GM13976 (cell line): ENCODE measurements at regions of chr4 and their contacts with region 1.

Region 1: GRCh38 chr4:119300101-119300978 is 21.6 kb downstream of the FABP2 start:
- DNase-seq: peak; percentile 90
- CTCF ChIP-seq: no peak

Region 2: GRCh38 chr4:118703118-118703517 is 597.2 kb before region 1 on chr4:
- in situ Hi-C with region 1: no loop called
- DNase-seq: no peak
- CTCF ChIP-seq: no peak

Region 3: GRCh38 chr4:118772081-118772766 is 528.1 kb before region 1 on chr4:
- in situ Hi-C with region 1: no loop called
- DNase-seq: peak; percentile 33
- CTCF ChIP-seq: peak; percentile 28

Region 4: GRCh38 chr4:118783887-118784286 is 516.5 kb before region 1 on chr4:
- in situ Hi-C with region 1: no loop called
- DNase-seq: no peak
- CTCF ChIP-seq: no peak

Region 5: DNA sequence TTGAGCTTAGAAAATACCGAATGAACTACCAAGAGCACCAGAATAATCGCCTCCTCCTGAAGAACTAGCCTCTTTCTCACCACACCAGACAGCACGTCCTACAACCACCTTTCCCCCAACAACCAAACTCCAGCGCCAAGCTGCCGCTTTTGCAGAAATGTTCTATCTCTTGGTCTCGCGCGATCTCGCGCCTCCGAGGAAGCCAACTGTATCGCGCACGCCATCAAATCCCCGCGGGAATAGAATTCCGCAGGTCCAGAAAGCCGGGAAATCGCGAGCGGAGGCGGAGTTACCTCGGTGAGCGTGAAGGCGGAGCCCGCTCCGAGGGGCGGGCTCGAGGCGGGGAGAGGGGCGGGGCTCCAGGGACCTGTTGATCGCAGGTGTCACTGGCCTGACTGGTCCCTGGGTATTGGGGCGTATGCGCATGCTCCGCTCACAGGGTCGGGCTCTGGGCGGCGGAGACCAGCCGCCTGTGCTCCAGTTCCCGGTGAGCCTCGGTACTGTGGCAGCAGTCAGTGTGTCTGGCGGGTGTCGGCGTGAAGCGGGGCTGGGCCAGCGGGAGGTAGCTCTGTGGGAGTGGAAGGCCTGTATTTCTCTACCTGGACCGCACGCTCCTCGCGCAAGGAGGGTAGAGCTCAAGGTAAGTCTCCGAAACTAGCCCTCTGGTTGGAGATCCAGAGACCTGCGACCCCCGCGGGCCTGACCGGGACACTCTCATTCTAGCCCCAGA is 87.9 kb before region 1 on chr4 and contains the start of gene USP53:
- in situ Hi-C with region 1: loop called (anchors 10 kb)
- DNase-seq: peak; percentile 96
- CTCF ChIP-seq: no peak

Region 6: GRCh38 chr4:119489305-119489704 is 189.0 kb after region 1 on chr4:
- in situ Hi-C with region 1: loop called (anchors 10 kb)
- DNase-seq: no peak
- CTCF ChIP-seq: no peak

Region 7: DNA sequence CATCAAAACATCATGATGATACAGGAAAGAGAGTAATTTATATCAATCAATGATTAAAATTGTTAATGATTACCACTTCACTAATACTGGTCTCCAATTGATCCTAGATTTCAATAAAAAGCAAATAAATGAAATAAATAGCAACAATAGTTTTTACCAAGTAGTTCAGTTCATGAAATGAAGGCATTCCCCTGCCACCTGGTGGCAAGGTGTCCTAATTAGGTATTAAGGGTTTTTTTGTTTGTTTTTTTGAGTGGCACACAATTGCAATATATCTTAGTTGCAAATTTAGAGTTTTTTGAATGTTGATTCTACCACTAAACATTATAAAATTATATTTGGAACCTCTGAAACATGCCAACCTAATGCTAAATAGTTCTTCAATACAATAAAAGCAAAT is 485.6 kb after region 1 on chr4:
- in situ Hi-C with region 1: loop called (anchors 25 kb)
- DNase-seq: no peak
- CTCF ChIP-seq: no peak